ENCODE measurements at regions of chr4 and their contacts with region 1.

Region 1: GRCh38 chr4:31089815-31090214 is 369.6 kb downstream of the PCDH7 start:
- DNase-seq: no peak

Region 2: GRCh38 chr4:30719460-30720020 is 370.3 kb before region 1 on chr4:
- intact Hi-C with region 1: loop called (anchors 5 kb)
- DNase-seq: peak; percentile 77

Measured in cardiac septum (tissue), 1 donor.